ENCODE measurements at regions of chr12 and their contacts with region 1.

Region 1: GRCh38 chr12:121793838-121794533 is 498 bp upstream of the RHOF start:
- DNase-seq: peak; percentile 96
- H3K4me3 Mint-ChIP-seq: peak overlapping the region; percentile 92
- H3K27ac Mint-ChIP-seq: peak overlapping the region; percentile 96
- H3K4me1 Mint-ChIP-seq: peaks cover 63% of the 10 kb centered on the region
- H3K27me3 Mint-ChIP-seq: no peaks in the 10 kb centered on the region

Region 2: DNA sequence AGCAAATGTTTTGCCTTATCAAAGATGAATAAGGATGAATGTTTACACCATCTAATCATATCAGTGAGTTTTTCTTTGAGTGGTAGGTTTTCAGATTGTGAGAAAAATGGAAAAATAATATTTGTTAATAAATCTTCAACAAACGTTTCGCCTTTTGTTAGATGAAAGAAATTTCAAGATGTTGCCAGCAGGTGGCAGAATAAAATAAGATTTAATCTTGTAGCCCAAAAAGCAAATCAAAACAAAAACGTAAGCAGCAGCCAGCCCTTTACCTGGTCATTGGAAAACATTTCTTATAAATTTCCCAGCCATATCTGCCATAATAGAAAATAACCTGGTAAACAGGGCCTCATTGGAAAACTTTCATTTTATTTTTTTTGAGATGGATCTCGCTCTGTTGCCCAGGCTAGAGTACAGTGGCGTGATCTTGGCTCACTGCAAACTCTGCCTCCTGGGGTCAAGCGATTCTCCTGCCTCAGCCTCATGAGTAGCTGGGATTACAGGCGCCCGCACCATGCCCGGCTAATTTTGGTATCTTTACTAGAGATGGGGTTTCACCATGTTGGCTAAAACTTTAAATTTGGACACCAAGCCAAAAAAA is 96.8 kb before region 1 on chr12:
- CTCF ChIA-PET with region 1: interaction called, 45 read pairs
- DNase-seq: peak; percentile 37
- H3K4me3 Mint-ChIP-seq: no peak overlapping the region
- H3K27ac Mint-ChIP-seq: no peak overlapping the region
- H3K4me1 Mint-ChIP-seq: peaks cover 2% of the 10 kb centered on the region
- H3K27me3 Mint-ChIP-seq: peaks cover 19% of the 10 kb centered on the region

Region 3: GRCh38 chr12:121765573-121765972 is 28.4 kb before region 1 on chr12:
- CTCF ChIA-PET with region 1: interaction called, 26 read pairs
- DNase-seq: no peak
- H3K4me3 Mint-ChIP-seq: no peak overlapping the region
- H3K27ac Mint-ChIP-seq: no peak overlapping the region
- H3K4me1 Mint-ChIP-seq: no peaks in the 10 kb centered on the region
- H3K27me3 Mint-ChIP-seq: no peaks in the 10 kb centered on the region

Region 4: GRCh38 chr12:121839106-121839992 is 45.4 kb after region 1 on chr12:
- CTCF ChIA-PET with region 1: interaction called, 39 read pairs
- DNase-seq: peak; percentile 99
- H3K4me3 Mint-ChIP-seq: peak overlapping the region; percentile 97
- H3K27ac Mint-ChIP-seq: peak overlapping the region; percentile 81
- H3K4me1 Mint-ChIP-seq: peaks cover 18% of the 10 kb centered on the region
- H3K27me3 Mint-ChIP-seq: peaks cover 12% of the 10 kb centered on the region

Region 5: DNA sequence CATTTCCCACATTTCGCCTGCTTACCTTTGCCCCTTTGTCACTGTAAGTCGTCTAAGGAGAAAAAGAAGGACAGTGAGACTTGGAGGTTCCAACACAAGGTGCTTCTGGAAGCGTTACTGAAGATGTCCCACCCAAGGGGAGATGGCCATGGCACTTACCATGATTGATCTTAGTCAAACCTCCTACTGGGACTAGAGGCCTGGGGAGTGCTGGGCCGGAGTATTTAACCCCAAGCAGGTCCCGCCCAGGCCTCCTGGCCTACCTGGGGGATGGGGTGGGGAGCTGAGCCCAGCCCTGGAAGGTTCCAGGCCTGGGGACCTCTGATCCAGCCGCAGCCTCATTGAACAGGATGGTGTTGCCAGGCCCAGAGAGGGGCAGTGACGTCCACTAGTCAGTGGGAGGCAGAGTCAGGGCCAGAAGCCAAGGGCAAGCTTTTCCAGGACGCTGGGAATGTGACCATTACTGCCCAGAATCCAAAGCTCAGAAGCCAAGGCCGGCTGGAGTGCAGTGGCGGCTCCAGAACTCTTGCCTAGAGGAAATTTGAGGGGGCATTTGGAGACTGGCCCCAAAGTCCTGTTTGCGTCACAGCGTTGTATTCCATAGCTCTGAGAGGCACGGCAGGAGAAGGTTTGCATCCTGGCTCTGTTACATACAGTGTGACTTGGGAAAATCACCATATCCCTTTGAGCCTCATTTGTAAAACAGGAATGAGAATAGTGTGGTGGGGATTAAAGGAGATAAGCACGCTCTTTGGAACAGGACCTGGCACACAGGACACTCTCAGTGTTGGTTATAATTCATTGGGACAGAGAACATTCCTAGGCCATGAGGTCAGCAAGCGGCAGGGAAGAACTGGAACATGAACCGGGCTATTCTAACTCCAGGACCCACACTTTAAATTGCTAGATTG is 64.9 kb after region 1 on chr12 and contains the start of gene HPD:
- CTCF ChIA-PET with region 1: no interaction called
- DNase-seq: no peak
- H3K4me3 Mint-ChIP-seq: no peak within 1 kb of the TSS
- H3K27ac Mint-ChIP-seq: no peak within 1 kb of the TSS
- H3K4me1 Mint-ChIP-seq: peaks cover 2% of the 10 kb centered on the region
- H3K27me3 Mint-ChIP-seq: no peaks in the 10 kb centered on the region

Region 6: DNA sequence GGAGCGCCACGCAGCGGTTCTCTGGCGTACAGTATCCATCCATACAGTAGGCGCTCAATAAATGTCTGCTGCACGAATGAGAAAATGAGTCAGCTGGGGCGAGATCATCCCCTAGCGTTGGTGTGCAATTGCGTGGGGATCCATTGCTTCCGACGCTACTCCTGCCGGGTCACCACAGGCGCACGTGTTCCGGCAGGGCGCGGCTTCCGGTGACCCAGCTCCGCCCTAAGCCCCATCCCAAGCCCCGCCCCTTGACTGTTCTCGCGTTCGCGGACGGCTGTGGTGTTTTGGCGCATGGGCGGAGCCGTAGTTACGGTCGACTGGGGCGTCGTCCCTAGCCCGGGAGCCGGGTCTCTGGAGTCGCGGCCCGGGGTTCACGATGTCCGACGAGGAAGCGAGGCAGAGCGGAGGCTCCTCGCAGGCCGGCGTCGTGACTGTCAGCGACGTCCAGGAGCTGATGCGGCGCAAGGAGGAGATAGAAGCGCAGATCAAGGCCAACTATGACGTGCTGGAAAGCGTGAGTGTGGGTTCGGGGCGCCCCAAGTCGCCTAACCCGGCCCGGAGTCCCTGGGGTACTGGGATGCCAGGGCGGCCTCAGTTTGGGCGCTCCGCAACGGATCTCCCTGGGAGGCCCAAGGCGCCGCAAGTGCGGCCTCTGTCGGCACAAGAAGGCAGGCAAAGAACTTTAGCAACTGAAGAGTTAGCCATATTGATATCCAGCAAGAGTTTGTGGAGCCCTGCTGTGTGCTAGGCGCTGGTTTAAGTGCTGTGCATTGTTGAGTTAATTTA is 94.7 kb after region 1 on chr12 and contains the start of gene PSMD9:
- CTCF ChIA-PET with region 1: interaction called, 76 read pairs
- DNase-seq: peak; percentile 98
- H3K4me3 Mint-ChIP-seq: peak within 1 kb of the TSS; percentile 93
- H3K27ac Mint-ChIP-seq: peak within 1 kb of the TSS; percentile 99
- H3K4me1 Mint-ChIP-seq: peaks cover 45% of the 10 kb centered on the region
- H3K27me3 Mint-ChIP-seq: peaks cover 6% of the 10 kb centered on the region